Head of caudate nucleus (tissue), 42 donors: ENCODE measurements at regions of chr11 and their contacts with region 1.

Region 1: GRCh38 chr11:34266090-34266912 is 91.5 kb downstream of the ABTB2 start:
- DNase-seq: peak in 41 of 42 donors; percentile 35 to 90 (median 69)

Region 2: DNA sequence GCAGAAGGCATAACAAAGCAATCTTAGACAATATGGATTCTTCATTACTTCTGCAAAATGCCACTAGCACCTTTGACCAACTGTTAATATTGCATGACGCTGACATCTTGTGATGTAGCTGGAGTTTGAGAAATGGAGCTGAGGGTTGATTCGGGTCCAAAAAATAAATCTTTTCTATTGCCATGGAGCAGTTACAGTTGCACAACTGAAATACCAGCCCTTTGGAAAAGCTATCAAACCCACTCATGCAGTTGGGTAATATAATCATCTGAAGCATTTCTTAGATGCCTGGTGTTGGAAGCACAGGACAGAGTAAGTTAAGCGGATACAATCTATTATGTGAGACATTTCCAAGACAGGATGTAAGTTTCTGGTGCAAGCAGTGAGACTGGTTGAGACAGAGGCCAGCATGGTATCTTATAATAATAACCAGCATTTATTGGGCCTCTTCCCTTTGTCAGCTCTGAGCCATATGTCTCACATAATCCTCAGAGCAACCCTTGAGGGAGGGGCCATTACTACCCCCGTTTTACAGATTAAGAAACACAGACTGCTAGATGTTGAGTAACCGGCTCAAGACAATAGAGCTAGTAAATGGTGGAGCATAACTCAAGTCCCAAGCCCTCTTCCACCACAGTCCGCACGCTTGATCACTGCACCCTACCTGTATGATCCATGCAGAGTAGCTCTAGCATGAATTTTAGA is 289.7 kb before region 1 on chr11:
- intact Hi-C with region 1: no loop called
- DNase-seq: no peak

Region 3: GRCh38 chr11:34174412-34175041 is 91.8 kb before region 1 on chr11:
- intact Hi-C with region 1: loop called (anchors 5 kb)
- DNase-seq: peak; percentile 78 to 96 (median 90)

Region 4: GRCh38 chr11:34331329-34331728 is 65.0 kb after region 1 on chr11:
- intact Hi-C with region 1: loop called (anchors 5 kb)
- DNase-seq: no peak

Region 5: DNA sequence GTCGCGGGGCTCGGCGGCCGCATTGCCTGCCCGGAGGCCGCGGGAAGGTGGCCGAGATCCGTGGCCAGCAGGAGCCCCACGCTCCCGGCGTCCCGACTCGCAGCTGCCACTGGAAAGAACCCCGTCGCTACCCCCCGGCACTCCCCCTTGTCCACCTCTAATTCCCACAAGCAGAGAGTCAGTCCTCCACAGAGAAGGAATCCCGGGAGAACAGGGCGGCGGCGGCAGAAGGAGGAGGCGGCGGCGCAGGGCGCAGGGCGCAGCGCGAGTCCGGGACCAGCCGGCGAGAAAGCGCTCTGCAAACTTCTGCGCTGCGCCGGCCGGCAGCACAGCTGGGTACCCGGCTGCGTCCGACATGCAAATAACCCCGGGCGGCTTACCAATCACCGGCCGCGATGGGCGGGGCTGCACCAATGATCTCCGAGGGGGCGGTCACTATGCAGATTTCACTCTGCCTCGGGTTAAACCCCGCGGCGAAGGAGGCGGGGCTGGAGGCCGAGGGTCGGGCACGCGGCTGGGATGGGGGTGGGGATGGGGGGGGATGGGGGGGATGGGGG is 91.5 kb after region 1 on chr11 and contains the start of gene ABTB2:
- intact Hi-C with region 1: loop called (anchors 5 kb)
- DNase-seq: peak; percentile 96 to 99 (median 99)